AG04450 (cell line): ENCODE measurements at regions of chr4 and their contacts with region 1.

Region 1: GRCh38 chr4:54217642-54218495 is 11.2 kb upstream of the PDGFRA start:
- DNase-seq: peak; percentile 64
- H3K4me3 ChIP-seq: peak overlapping the region; percentile 61
- H3K27ac ChIP-seq: no peak overlapping the region
- H3K27me3 ChIP-seq: no peaks in the 10 kb centered on the region
- CTCF ChIP-seq: peak; percentile 92

Region 2: GRCh38 chr4:53195815-53196661 is 1021.8 kb before region 1 on chr4:
- CTCF ChIA-PET with region 1: interaction called, 12 read pairs
- POLR2A ChIA-PET with region 1: no interaction called
- DNase-seq: no peak
- H3K4me3 ChIP-seq: peak overlapping the region; percentile 17; the same call in 1 of the 2 replicates
- H3K27ac ChIP-seq: no peak overlapping the region
- H3K27me3 ChIP-seq: no peaks in the 10 kb centered on the region
- CTCF ChIP-seq: no peak